MCF 10A (cell line): ENCODE measurements at regions of chr11 and their contacts with region 1.

Region 1: GRCh38 chr11:68010090-68011041 is at the start of gene ALDH3B1:
- DNase-seq: peak; percentile 95
- H3K4me3 Mint-ChIP-seq: peak within 1 kb of the TSS; percentile 88
- H3K27ac Mint-ChIP-seq: peak within 1 kb of the TSS; percentile 89
- H3K4me1 Mint-ChIP-seq: peaks cover 54% of the 10 kb centered on the region
- H3K27me3 Mint-ChIP-seq: no peaks in the 10 kb centered on the region
- CTCF ChIP-seq: no peak
- total RNA-seq, gene ALDH3B1: 37.2 and 50.1 TPM in 2 replicates

Region 2: GRCh38 chr11:68020575-68020974 is 10.2 kb after region 1 on chr11:
- CTCF ChIA-PET with region 1: interaction called, 34 read pairs
- POLR2A ChIA-PET with region 1: interaction called, 46 read pairs
- intact Hi-C with region 1: loop called (anchors 1 kb)
- DNase-seq: peak; percentile 90
- H3K4me3 Mint-ChIP-seq: no peak overlapping the region
- H3K27ac Mint-ChIP-seq: peak overlapping the region; percentile 92
- H3K4me1 Mint-ChIP-seq: peaks cover 44% of the 10 kb centered on the region
- H3K27me3 Mint-ChIP-seq: no peaks in the 10 kb centered on the region
- CTCF ChIP-seq: peak; percentile 25

Region 3: DNA sequence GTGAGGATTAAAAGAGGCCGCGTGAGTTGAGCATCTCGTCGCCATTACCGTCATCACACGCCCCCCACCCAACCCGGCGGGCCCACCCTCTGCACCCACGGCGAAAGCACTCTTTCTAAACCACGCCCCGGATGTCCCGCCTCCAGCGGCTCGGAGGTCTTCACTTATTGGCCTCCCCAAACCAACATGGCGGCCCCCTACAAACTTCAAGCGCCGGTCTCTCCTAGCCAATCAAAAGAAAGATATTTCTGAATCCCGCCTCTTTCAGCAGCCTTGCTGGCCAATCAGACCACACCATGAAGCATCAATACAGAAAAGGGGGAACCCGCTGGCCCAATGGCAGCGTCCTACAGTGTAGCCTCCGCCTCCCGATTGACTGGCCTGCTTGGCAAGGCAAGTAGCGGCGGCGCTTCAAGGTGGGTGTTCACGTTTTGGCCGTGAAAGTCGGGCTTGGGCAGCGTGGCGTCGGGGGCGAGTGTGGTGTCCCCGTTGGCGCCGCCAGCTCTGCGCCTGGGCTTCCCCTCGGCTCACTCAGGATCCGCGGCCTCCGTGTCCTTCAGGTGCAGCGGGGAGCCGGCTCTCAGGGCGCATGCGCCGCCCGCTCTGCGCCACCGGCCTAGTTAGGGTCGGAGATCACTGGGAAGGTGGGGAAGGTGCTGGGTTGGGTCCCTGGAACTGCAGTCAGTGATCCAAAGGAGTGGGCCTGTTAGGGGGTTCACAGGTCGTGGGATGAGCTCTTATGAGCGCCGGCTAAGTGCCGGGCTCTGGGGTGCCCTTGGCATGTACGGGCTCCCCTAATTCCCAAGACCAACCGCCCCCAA is 20.2 kb after region 1 on chr11 and contains the start of gene NDUFS8:
- CTCF ChIA-PET with region 1: interaction called, 10 read pairs
- POLR2A ChIA-PET with region 1: interaction called, 59 read pairs
- intact Hi-C with region 1: loop called (anchors 1 kb)
- DNase-seq: peak; percentile 99
- H3K4me3 Mint-ChIP-seq: peak within 1 kb of the TSS; percentile 92
- H3K27ac Mint-ChIP-seq: peak within 1 kb of the TSS; percentile 89
- H3K4me1 Mint-ChIP-seq: peaks cover 26% of the 10 kb centered on the region
- H3K27me3 Mint-ChIP-seq: no peaks in the 10 kb centered on the region
- CTCF ChIP-seq: no peak
- total RNA-seq, gene NDUFS8: 211 and 229 TPM in 2 replicates

Region 4: GRCh38 chr11:68066742-68067141 is 56.4 kb after region 1 on chr11:
- CTCF ChIA-PET with region 1: no interaction called
- POLR2A ChIA-PET with region 1: no interaction called
- intact Hi-C with region 1: no loop called
- DNase-seq: no peak
- H3K4me3 Mint-ChIP-seq: no peak overlapping the region
- H3K27ac Mint-ChIP-seq: no peak overlapping the region
- H3K4me1 Mint-ChIP-seq: no peaks in the 10 kb centered on the region
- H3K27me3 Mint-ChIP-seq: no peaks in the 10 kb centered on the region
- CTCF ChIP-seq: no peak

Region 5: GRCh38 chr11:68121067-68121899 is 110.9 kb after region 1 on chr11 and contains the start of gene CHKA:
- CTCF ChIA-PET with region 1: interaction called, 3 read pairs
- POLR2A ChIA-PET with region 1: interaction called, 4 read pairs
- intact Hi-C with region 1: loop called (anchors 1 kb)
- DNase-seq: peak; percentile 87
- H3K4me3 Mint-ChIP-seq: peak within 1 kb of the TSS; percentile 75
- H3K27ac Mint-ChIP-seq: peak within 1 kb of the TSS; percentile 59
- H3K4me1 Mint-ChIP-seq: peaks cover 11% of the 10 kb centered on the region
- H3K27me3 Mint-ChIP-seq: no peaks in the 10 kb centered on the region
- CTCF ChIP-seq: no peak
- total RNA-seq, gene CHKA: 7.8 and 13.7 TPM in 2 replicates

Region 6: GRCh38 chr11:68312117-68312779 is 301.9 kb after region 1 on chr11 and contains the start of gene LRP5:
- CTCF ChIA-PET with region 1: no interaction called
- POLR2A ChIA-PET with region 1: interaction called, 12 read pairs
- intact Hi-C with region 1: no loop called
- DNase-seq: no peak
- H3K4me3 Mint-ChIP-seq: peak within 1 kb of the TSS; percentile 87
- H3K27ac Mint-ChIP-seq: peak within 1 kb of the TSS; percentile 88
- H3K4me1 Mint-ChIP-seq: peaks cover 40% of the 10 kb centered on the region
- H3K27me3 Mint-ChIP-seq: no peaks in the 10 kb centered on the region
- CTCF ChIP-seq: no peak
- total RNA-seq, gene LRP5: 31.6 and 32.8 TPM in 2 replicates

Region 7: DNA sequence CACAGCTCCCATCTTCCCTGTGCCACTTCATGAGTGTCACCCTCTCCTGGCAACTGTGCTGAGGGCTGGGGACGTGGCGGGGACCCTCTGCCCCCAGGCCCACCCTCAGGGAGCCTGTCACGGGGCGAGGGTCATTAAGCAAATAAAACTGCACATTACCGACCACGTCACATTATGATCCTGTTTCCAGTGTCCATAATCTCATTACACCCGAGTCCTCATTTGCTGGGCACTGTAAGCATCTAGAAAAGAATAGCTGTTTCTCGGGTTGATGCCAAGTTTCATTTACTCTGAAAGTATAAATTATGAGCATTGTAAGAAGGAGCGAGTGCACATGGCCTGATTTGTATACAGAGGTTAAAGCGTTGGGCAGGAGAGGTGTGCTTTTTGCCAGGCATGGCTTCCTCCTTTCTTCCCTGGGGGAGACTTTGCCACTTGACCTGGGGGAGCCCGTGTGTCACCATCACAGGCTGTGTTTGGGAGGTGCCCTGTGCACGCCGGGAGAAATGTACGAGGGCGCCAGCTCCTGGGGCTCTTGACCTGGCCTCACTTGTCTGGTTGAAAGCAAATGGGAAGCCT is 352.5 kb after region 1 on chr11:
- CTCF ChIA-PET with region 1: no interaction called
- POLR2A ChIA-PET with region 1: no interaction called
- intact Hi-C with region 1: no loop called
- DNase-seq: no peak
- H3K4me3 Mint-ChIP-seq: no peak overlapping the region
- H3K27ac Mint-ChIP-seq: no peak overlapping the region
- H3K4me1 Mint-ChIP-seq: no peaks in the 10 kb centered on the region
- H3K27me3 Mint-ChIP-seq: no peaks in the 10 kb centered on the region
- CTCF ChIP-seq: no peak